MCF 10A (cell line): ENCODE measurements at regions of chr14 and their contacts with region 1.

Region 1: GRCh38 chr14:52458721-52459085 is 93.6 kb downstream of the TXNDC16 start:
- DNase-seq: peak; percentile 35
- H3K4me3 Mint-ChIP-seq: peak overlapping the region; percentile 72
- H3K27ac Mint-ChIP-seq: peak overlapping the region; percentile 98
- H3K4me1 Mint-ChIP-seq: peaks cover 33% of the 10 kb centered on the region
- H3K27me3 Mint-ChIP-seq: no peaks in the 10 kb centered on the region
- CTCF ChIP-seq: no peak

Region 2: DNA sequence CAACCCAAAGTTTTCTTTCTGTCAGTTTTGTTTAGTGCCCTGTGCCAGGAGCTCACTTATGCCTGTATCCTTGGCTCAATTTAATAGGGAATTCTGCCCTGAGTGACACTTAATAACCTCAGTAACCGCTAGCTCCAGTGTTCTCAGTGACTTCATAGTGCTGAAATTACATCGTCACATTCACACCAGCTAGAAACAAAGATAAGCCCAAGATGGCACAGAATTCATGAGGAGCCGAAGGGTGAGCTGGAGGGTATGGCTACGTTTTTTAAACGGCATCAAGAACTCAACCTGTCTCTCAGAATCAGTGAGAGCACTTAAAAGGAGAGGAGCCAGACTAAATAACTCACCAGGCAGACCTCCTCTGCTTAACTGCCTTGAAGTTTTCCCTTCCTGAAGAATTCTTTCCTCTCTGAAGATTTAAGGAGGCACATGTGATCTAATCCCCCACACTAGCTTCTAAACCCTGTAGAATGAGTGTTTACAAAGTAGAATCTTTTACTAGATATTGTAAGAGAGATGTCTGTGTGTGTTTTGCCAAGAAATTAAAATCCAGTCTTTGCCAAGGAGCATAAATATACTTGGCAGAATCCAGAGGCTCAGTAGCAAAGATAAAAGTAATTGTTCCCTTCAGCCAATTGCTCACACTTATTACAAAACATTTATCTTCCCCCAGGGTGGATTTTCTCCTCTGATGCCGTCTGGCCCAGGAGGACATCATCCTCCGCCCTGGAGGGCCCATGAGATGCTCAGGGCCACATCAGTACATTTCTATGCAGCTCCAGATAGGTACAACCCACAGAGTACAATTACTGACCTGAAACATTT is 107.3 kb before region 1 on chr14:
- CTCF ChIA-PET with region 1: no interaction called
- POLR2A ChIA-PET with region 1: interaction called, 11 read pairs
- intact Hi-C with region 1: no loop called
- DNase-seq: peak; percentile 78
- H3K4me3 Mint-ChIP-seq: peak overlapping the region; percentile 28
- H3K27ac Mint-ChIP-seq: peak overlapping the region; percentile 82
- H3K4me1 Mint-ChIP-seq: peaks cover 43% of the 10 kb centered on the region
- H3K27me3 Mint-ChIP-seq: no peaks in the 10 kb centered on the region
- CTCF ChIP-seq: no peak

Region 3: GRCh38 chr14:52443506-52443905 is 15.2 kb before region 1 on chr14:
- CTCF ChIA-PET with region 1: interaction called, 5 read pairs
- POLR2A ChIA-PET with region 1: interaction called, 12 read pairs
- intact Hi-C with region 1: no loop called
- DNase-seq: no peak
- H3K4me3 Mint-ChIP-seq: no peak overlapping the region
- H3K27ac Mint-ChIP-seq: no peak overlapping the region
- H3K4me1 Mint-ChIP-seq: peaks cover 6% of the 10 kb centered on the region
- H3K27me3 Mint-ChIP-seq: no peaks in the 10 kb centered on the region
- CTCF ChIP-seq: no peak

Region 4: DNA sequence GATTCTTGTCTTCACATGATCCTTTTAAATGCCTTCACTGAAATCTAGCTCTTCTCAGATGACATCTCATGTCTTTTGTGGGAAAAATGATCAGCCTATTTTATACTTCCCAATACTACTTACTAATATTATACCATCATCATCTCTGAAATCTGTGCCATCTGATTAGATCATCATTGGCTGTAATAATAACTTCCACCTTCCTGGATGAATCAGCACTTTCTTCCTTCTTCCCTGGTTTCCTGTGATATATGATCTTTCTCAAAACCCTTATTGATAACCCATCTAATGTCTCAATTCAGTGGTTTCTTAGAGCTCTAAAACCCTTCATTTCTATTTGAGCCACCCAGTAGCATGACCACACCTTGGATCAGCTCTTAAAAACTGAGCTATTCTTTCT is 124.8 kb after region 1 on chr14:
- CTCF ChIA-PET with region 1: no interaction called
- POLR2A ChIA-PET with region 1: no interaction called
- intact Hi-C with region 1: no loop called
- DNase-seq: no peak
- H3K4me3 Mint-ChIP-seq: no peak overlapping the region
- H3K27ac Mint-ChIP-seq: no peak overlapping the region
- H3K4me1 Mint-ChIP-seq: peaks cover 8% of the 10 kb centered on the region
- H3K27me3 Mint-ChIP-seq: no peaks in the 10 kb centered on the region
- CTCF ChIP-seq: no peak